ENCODE measurements at regions of chr12 and their contacts with region 1.

Region 1: GRCh38 chr12:92145731-92146496 is at the start of gene BTG1:
- DNase-seq: peak; percentile 96 to 100
- ATAC-seq: peak; percentile 89 to 96 (median 90)
- H3K4me3 ChIP-seq: peak within 1 kb of the TSS; percentile 83 to 98 (median 90)
- H3K27ac ChIP-seq: peak within 1 kb of the TSS; percentile 89 to 99 (median 98)
- H3K4me1 ChIP-seq: peaks cover 0 to 31% (median 8%) of the 10 kb centered on the region in 9 donors
- H3K27me3 ChIP-seq: no peaks in the 10 kb centered on the region
- CTCF ChIP-seq: no peak
- total RNA-seq, gene BTG1: 54.4 to 127 (median 71.3) TPM

Region 2: GRCh38 chr12:91577586-91578539 is 568.1 kb before region 1 on chr12:
- intact Hi-C with region 1: loop called in 9 of 10 experiments (anchors 2 to 10 kb)
- DNase-seq: no peak
- ATAC-seq: peak in 6 of 8 donors; percentile 39 to 70 (median 61)
- H3K4me3 ChIP-seq: peak overlapping the region in 7 of 10 donors; percentile 16 to 33 (median 26)
- H3K27ac ChIP-seq: peak overlapping the region in 2 of 10 donors; percentile 2 to 11
- H3K4me1 ChIP-seq: peaks cover 0 to 17% (median 9%) of the 10 kb centered on the region in 9 donors
- H3K27me3 ChIP-seq: no peaks in the 10 kb centered on the region
- CTCF ChIP-seq: peak; percentile 56 to 84 (median 74)

Region 3: GRCh38 chr12:92034858-92035401 is 111.0 kb before region 1 on chr12:
- intact Hi-C with region 1: loop called in 2 of 10 experiments (anchors 5 kb)
- DNase-seq: peak; percentile 29 to 47
- ATAC-seq: peak in 7 of 8 donors; percentile 32 to 60 (median 53)
- H3K4me3 ChIP-seq: peak overlapping the region in 7 of 10 donors; percentile 2 to 38 (median 32)
- H3K27ac ChIP-seq: peak overlapping the region in 5 of 10 donors; percentile 6 to 74 (median 51)
- H3K4me1 ChIP-seq: peaks cover 0 to 69% (median 32%) of the 10 kb centered on the region in 9 donors
- H3K27me3 ChIP-seq: no peaks in the 10 kb centered on the region
- CTCF ChIP-seq: no peak

Region 4: DNA sequence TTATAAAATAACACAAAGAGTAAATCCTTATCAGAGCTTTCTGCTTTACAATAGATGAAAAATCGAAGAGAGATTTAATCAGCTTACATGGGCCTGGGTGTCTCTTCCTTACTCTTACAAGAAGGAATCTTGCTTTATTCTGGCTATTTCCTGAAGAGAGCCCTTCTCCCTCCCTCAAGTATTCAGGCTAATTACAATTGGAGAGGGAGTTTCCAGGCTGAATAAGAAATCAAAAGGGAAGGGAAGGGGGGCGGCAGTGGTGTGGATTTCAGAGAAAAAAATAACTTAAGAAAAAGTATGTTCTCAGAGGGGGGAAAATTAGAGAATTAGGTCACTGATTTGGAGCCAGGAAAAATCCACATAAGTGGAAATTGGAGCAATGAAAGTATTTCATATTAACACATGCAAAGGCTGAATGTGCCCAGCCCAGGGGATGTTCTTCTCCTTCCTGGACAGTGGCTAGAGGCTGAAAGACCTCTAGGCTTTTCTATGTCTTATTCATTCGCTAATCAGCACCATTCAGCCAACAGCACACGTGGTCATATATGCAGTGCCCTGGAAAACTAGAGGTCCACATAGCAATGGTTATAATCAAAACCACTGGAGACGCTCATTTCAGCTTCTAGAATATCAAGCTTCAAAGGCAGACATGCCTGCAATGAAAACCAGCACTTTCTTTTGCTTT is 158.6 kb after region 1 on chr12:
- intact Hi-C with region 1: loop called in 1 of 10 experiments (anchors 5 kb)
- DNase-seq: peak in 1 of 2 donors; percentile 31
- ATAC-seq: peak; percentile 47 to 95 (median 84)
- H3K4me3 ChIP-seq: no peak overlapping the region
- H3K27ac ChIP-seq: peak overlapping the region in 8 of 10 donors; percentile 28 to 78 (median 52)
- H3K4me1 ChIP-seq: peaks cover 0 to 35% (median 23%) of the 10 kb centered on the region in 9 donors
- H3K27me3 ChIP-seq: no peaks in the 10 kb centered on the region
- CTCF ChIP-seq: no peak

Region 5: DNA sequence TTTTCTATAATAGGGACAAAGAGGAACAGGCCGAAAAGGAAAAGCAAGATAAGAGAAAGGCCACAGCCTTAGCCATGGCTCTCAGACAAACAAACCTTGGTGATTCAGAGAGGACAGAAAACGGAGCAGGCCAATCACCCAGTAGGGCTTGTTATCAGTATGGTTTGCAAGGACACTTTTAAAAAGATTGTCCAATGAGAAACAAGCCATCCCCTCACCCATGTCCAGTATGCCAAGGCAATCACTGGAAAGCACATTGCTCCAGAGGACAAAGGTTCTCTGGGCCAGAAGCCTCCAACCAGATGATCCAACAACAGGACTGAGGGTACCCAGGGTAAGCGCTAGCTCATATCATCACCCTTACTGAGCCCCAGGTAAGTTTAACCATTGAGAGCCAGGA is 243.6 kb after region 1 on chr12:
- intact Hi-C with region 1: no loop called
- DNase-seq: no peak
- ATAC-seq: no peak
- H3K4me3 ChIP-seq: no peak overlapping the region
- H3K27ac ChIP-seq: no peak overlapping the region
- H3K4me1 ChIP-seq: peaks cover 0 to 3% (median 0%) of the 10 kb centered on the region in 9 donors
- H3K27me3 ChIP-seq: no peaks in the 10 kb centered on the region
- CTCF ChIP-seq: no peak

Region 6: DNA sequence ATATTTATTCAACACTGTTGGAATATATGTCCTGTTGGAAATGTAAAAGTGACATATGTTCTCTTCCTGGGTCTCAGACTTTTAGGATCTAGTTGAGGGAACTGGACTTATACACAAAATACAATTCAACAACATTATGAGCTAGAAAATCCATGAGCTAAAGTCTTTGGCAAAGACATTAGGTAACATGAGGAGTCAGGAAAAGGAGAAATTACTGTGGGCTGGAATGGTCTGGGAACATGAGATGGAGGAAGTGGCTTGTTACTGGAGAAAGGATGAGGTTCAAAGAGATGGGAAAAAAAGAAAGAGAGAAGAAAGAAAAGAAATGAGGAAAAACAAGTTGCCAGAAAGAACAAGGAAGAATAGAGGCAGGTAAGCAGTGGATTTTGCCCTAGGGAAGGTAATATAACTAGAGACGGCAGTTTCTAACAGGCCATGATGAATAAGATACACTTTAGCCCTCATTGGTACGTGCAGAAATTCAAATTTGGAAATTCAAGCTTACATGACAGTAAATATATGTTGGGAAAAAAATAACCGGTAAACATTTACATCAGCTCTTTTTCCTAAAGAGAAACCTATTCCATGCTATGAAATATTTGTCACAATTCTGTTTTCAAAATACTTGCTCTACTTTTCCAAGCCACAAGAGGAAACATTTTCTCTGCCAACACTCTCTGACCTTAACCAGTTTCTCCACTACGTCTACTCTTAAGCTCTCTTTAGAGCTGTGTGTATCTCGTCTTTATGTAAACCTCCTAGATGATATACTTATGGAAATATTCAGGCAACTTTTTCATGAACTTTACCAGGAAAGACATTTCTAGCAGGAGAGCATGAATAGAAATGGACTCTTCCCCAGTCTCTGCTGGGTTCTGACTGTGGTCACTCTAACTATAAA is 268.5 kb after region 1 on chr12:
- intact Hi-C with region 1: loop called in 2 of 10 experiments (anchors 10 kb)
- DNase-seq: no peak
- ATAC-seq: peak in 1 of 8 donors; percentile 14
- H3K4me3 ChIP-seq: no peak overlapping the region
- H3K27ac ChIP-seq: peak overlapping the region in 1 of 10 donors; percentile 29
- H3K4me1 ChIP-seq: peaks cover 0 to 42% (median 24%) of the 10 kb centered on the region in 9 donors
- H3K27me3 ChIP-seq: no peaks in the 10 kb centered on the region
- CTCF ChIP-seq: peak in 2 of 9 donors; percentile 8 to 10

Region 7: GRCh38 chr12:92505254-92506231 is 359.6 kb after region 1 on chr12:
- intact Hi-C with region 1: loop called in 2 of 10 experiments (anchors 10 kb)
- DNase-seq: peak; percentile 65 to 80
- ATAC-seq: peak; percentile 63 to 87 (median 78)
- H3K4me3 ChIP-seq: peak overlapping the region in 6 of 10 donors; percentile 16 to 33 (median 30)
- H3K27ac ChIP-seq: peak overlapping the region; percentile 61 to 95 (median 80)
- H3K4me1 ChIP-seq: peaks cover 14 to 59% (median 40%) of the 10 kb centered on the region in 9 donors
- H3K27me3 ChIP-seq: no peaks in the 10 kb centered on the region
- CTCF ChIP-seq: no peak

Region 8: GRCh38 chr12:92570056-92570753 is 424.3 kb after region 1 on chr12:
- intact Hi-C with region 1: loop called in 9 of 10 experiments (anchors 2 to 10 kb)
- DNase-seq: peak in 1 of 2 donors; percentile 82
- ATAC-seq: peak; percentile 67 to 92 (median 86)
- H3K4me3 ChIP-seq: no peak overlapping the region
- H3K27ac ChIP-seq: peak overlapping the region in 2 of 10 donors; percentile 23 to 58
- H3K4me1 ChIP-seq: peaks cover 0 to 38% (median 8%) of the 10 kb centered on the region in 9 donors
- H3K27me3 ChIP-seq: no peaks in the 10 kb centered on the region
- CTCF ChIP-seq: peak; percentile 70 to 89 (median 82)